ENCODE measurements at regions of chr12 and their contacts with region 1.

Region 1: DNA sequence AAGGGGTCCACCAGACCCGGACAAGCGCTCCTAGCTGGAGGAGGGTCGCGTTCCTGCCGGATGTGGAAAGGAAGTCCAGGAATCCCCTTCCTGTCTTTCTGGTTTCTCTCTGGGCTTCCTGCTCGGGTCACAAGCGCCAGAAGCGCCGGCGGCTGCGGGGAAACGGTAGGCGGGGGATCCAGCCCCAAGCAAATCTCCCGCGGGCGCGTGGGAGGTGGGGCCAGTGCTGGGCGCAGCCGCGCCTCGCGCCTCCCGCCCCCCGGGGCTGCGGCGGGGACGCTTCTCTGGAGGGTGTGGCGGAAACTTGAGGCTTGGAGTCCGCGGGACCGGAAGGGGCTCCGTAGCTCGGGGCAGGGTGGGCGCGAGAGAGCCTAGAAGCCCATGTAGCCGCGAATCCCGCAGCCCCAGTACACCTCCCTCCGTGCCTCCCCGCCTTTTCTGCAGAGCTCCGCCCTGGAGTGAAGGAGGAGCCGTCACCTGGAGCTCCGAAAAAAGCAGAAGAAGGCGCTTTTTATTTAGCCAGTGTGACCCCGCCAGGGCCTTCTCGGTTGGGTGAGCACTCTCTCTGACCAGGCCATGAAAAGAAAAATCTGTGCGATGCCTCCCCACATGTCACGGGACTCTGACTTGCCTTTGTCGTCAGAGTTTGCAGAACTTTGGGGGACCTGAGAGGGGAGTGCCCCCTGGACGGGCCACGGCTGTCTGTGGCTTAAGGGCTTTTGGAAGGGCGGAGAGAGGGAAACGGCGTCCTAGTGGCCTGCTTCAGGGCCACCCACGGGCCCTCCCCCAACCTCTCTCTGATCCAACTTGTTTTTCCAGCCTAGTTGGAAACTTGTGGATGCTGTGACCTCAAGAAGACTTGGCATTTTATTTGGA is 21.4 kb upstream of the CLEC2D start:
- DNase-seq: peak; percentile 96
- H3K4me3 ChIP-seq: peak overlapping the region; percentile 91
- H3K27ac ChIP-seq: peak overlapping the region; percentile 98
- H3K4me1 ChIP-seq: peaks cover 44% of the 10 kb centered on the region
- CTCF ChIP-seq: no peak

Region 2: GRCh38 chr12:8662593-8662992 is 985.5 kb before region 1 on chr12 and contains the start of gene MFAP5:
- CTCF ChIA-PET with region 1: no interaction called
- POLR2A ChIA-PET with region 1: interaction called, 11 read pairs
- intact Hi-C with region 1: no loop called
- DNase-seq: no peak
- H3K4me3 ChIP-seq: no peak within 1 kb of the TSS
- H3K27ac ChIP-seq: no peak within 1 kb of the TSS
- H3K4me1 ChIP-seq: peaks cover 7% of the 10 kb centered on the region
- CTCF ChIP-seq: no peak
- total RNA-seq, gene MFAP5: not detected in 2 replicates

Region 3: GRCh38 chr12:9214536-9214935 is 433.5 kb before region 1 on chr12:
- CTCF ChIA-PET with region 1: no interaction called
- POLR2A ChIA-PET with region 1: no interaction called
- intact Hi-C with region 1: no loop called
- DNase-seq: no peak
- H3K4me3 ChIP-seq: no peak overlapping the region
- H3K27ac ChIP-seq: no peak overlapping the region
- H3K4me1 ChIP-seq: no peaks in the 10 kb centered on the region
- CTCF ChIP-seq: no peak

Region 4: GRCh38 chr12:9634177-9634803 is 13.8 kb before region 1 on chr12:
- CTCF ChIA-PET with region 1: no interaction called
- POLR2A ChIA-PET with region 1: interaction called, 13 read pairs
- intact Hi-C with region 1: no loop called
- DNase-seq: peak; percentile 83
- H3K4me3 ChIP-seq: no peak overlapping the region
- H3K27ac ChIP-seq: peak overlapping the region; percentile 22
- H3K4me1 ChIP-seq: peaks cover 32% of the 10 kb centered on the region
- CTCF ChIP-seq: peak; percentile 100

Region 5: DNA sequence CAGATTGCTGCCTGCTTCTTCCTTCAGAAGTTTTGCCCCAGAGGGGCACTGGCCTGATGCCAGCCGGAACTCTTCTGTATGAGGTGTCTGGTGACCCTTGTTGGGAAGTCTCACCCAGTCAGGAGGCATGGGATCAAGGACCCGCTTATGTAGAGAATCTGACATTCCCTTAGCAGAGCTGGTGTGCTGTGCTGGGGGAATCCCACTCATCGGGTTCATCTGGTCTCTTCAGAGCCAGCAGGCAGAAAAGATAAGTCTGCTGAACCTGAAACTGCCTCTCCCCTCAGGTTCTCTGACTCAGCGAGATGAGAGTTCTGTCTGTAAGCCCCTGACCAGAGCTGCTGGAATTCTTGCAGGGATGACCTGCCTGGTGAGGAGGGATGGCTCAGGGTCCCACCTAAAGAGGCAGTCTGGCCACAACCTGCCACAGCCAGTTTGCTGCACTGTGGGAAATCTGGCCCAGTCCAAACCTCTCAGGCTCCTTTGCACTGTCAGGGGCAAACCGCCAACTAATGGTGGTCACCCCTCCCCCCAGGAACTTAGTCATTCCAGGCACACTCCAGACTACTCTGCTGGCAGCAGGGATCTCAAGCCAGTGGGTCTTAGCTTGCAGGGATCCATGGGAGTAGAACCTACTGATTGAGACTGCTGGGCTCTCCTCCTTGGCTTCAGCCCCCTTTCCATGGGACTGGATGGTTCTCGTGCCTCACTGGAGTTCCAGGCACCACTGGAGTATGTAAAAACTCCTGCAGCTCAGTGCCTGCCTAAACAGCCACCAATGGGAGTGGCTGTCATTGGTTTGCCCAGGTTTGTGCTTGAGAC is 25.6 kb after region 1 on chr12:
- CTCF ChIA-PET with region 1: no interaction called
- POLR2A ChIA-PET with region 1: interaction called, 146 read pairs
- intact Hi-C with region 1: loop called (anchors 1 kb)
- DNase-seq: peak; percentile 43
- H3K4me3 ChIP-seq: peak overlapping the region; percentile 68
- H3K27ac ChIP-seq: peak overlapping the region; percentile 87
- H3K4me1 ChIP-seq: peaks cover 93% of the 10 kb centered on the region
- CTCF ChIP-seq: no peak

Region 6: GRCh38 chr12:9731797-9732196 is 83.7 kb after region 1 on chr12:
- CTCF ChIA-PET with region 1: no interaction called
- POLR2A ChIA-PET with region 1: interaction called, 60 read pairs
- intact Hi-C with region 1: loop called (anchors 1 kb)
- DNase-seq: peak; percentile 77
- H3K4me3 ChIP-seq: peak overlapping the region; percentile 78
- H3K27ac ChIP-seq: peak overlapping the region; percentile 99
- H3K4me1 ChIP-seq: peaks cover 77% of the 10 kb centered on the region
- CTCF ChIP-seq: no peak

Region 7: DNA sequence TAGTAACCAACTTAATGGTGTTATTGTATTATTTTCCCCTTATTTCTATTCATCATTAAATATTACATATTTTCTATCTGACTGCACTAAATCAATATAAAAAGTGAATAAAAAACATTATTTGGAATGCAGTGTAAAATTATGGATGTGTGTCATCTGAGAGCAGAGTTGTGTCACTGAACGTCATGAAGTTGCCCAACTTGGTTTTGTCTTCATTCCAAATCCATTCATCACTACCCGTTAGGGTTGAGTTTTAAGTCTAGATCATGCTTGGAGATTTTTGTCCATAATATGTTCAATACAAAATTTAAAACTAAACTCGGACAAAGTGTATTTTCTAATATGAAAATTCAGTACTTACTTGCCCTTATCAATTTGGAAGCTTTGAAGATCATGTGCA is 195.4 kb after region 1 on chr12:
- CTCF ChIA-PET with region 1: no interaction called
- POLR2A ChIA-PET with region 1: no interaction called
- intact Hi-C with region 1: no loop called
- DNase-seq: no peak
- H3K4me3 ChIP-seq: no peak overlapping the region
- H3K27ac ChIP-seq: no peak overlapping the region
- H3K4me1 ChIP-seq: no peaks in the 10 kb centered on the region
- CTCF ChIP-seq: no peak

Region 8: GRCh38 chr12:10212201-10213131 is 564.4 kb after region 1 on chr12 and contains the start of gene GABARAPL1:
- CTCF ChIA-PET with region 1: no interaction called
- POLR2A ChIA-PET with region 1: no interaction called
- intact Hi-C with region 1: loop called (anchors 2 kb)
- DNase-seq: peak; percentile 79
- H3K4me3 ChIP-seq: peak within 1 kb of the TSS; percentile 98
- H3K27ac ChIP-seq: peak within 1 kb of the TSS; percentile 86
- H3K4me1 ChIP-seq: peaks cover 21% of the 10 kb centered on the region
- CTCF ChIP-seq: no peak
- total RNA-seq, gene GABARAPL1: 34.2 and 40.7 TPM in 2 replicates

Measured in OCI-LY7 (cell line).